ENCODE measurements at regions of chr20 and their contacts with region 1.

Region 1: GRCh38 chr20:13771853-13772453 is 12.8 kb downstream of the ESF1 start:
- DNase-seq: no peak
- ATAC-seq: no peak
- H3K4me3 Mint-ChIP-seq: no peak overlapping the region
- H3K27ac Mint-ChIP-seq: no peak overlapping the region
- H3K4me1 Mint-ChIP-seq: peaks cover 9% of the 10 kb centered on the region
- H3K27me3 Mint-ChIP-seq: no peaks in the 10 kb centered on the region
- CTCF ChIP-seq: no peak

Region 2: DNA sequence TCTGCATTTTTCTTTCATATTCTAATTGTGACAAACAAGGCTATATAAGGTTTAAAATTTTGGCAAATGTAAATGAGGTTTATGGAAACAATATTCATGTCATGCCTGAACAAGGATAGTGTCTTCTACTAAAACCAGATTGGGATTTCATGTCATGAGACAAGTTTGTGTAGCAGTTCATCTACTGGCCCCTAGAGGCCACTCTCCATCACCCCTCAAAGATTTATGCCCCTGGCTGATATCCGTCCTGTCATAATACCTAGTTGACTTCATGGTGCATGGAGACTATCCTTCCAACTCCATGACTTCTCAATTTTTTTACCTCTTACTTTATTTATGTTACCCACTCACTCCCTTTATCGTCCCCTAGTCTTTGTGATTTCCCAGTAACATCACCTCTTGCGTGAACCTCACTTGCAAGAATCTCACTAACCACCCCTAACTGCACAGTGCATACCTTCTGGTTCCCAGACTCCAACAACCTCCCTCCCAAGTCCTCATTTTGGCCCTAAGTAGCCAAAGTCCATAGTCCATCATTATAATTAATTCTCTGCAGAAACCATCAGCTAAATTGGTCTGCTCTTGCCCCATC is 313.0 kb before region 1 on chr20:
- CTCF ChIA-PET with region 1: interaction called, 3 read pairs
- POLR2A ChIA-PET with region 1: no interaction called
- intact Hi-C with region 1: loop called (anchors 1 kb)
- DNase-seq: no peak
- ATAC-seq: peak; percentile 54
- H3K4me3 Mint-ChIP-seq: no peak overlapping the region
- H3K27ac Mint-ChIP-seq: no peak overlapping the region
- H3K4me1 Mint-ChIP-seq: no peaks in the 10 kb centered on the region
- H3K27me3 Mint-ChIP-seq: no peaks in the 10 kb centered on the region
- CTCF ChIP-seq: no peak

Region 3: DNA sequence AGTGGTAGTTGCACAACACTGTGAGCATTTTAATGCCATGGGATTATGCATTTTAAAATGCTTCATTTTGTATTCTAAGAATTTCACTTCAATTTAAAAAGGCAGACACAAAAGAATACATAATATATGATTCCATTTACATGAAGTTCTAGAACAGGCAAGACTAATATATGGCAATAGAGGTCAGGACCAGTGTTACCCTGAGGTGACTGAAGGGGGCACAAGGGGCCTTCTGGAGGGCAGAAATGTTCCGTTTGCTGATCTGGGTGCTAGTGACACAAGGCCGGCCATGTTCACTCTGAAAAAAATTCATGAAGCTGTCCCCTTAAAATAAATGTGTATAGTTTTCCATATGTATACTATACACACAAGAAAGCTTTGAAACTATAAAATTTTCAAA is 161.8 kb before region 1 on chr20:
- CTCF ChIA-PET with region 1: interaction called, 32 read pairs
- POLR2A ChIA-PET with region 1: no interaction called
- intact Hi-C with region 1: loop called (anchors 1 kb)
- DNase-seq: no peak
- ATAC-seq: peak; percentile 47
- H3K4me3 Mint-ChIP-seq: no peak overlapping the region
- H3K27ac Mint-ChIP-seq: no peak overlapping the region
- H3K4me1 Mint-ChIP-seq: peaks cover 1% of the 10 kb centered on the region
- H3K27me3 Mint-ChIP-seq: no peaks in the 10 kb centered on the region
- CTCF ChIP-seq: no peak